ENCODE measurements at regions of chr18 and their contacts with region 1.

Region 1: DNA sequence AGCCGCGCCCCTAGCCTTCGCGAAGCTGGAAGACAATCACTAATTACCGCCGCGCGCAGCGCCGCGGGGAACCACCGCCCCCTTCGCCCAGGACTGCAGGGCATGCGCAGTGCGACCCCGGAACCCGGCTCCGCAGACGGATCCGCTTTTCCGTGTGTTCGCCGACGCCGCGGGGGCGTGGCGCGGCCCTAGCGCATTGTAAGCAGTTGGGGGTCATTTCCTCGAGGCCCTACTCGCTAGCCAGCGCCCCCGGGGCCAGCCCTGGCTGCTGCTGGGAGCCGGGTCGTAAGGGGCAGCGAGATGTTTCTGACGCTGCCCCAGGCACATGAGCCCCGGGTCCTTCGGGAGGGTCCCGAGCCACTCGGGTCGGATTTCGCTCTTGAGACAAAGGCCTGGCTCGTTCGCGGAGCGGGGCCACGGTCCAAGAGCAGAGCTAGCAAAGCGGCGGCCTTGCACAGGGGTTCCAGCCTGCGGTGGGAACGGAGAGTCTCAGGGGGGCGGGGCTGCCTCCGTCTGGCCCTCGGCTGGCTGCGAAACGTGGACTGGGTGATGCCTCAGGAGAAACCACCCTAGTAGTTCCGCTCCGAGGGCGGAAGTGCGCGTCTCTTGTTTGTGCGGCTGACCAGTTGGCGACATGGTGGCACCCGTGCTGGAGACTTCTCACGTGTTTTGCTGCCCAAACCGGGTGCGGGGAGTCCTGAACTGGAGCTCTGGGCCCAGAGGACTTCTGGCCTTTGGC is at the starts of genes ELP2 and SLC39A6:
- DNase-seq: peak; percentile 98
- H3K4me3 ChIP-seq: peak within 1 kb of the TSS; percentile 68 to 89 (median 74)
- H3K27ac ChIP-seq: peak within 1 kb of the TSS; percentile 96 to 99 (median 98)
- H3K4me1 ChIP-seq: peaks cover 6 to 40% (median 30%) of the 10 kb centered on the region in 4 donors
- H3K27me3 ChIP-seq: no peaks in the 10 kb centered on the region
- CTCF ChIP-seq: no peak
- EP300 ChIP-seq: peak in 1 of 4 donors; percentile 52
- POLR2A ChIP-seq: peak; percentile 32 to 34
- total RNA-seq, gene ELP2: 51.7 to 77.2 (median 67.2) TPM
- total RNA-seq, gene SLC39A6: 28.1 to 34.6 (median 31.8) TPM

Region 2: DNA sequence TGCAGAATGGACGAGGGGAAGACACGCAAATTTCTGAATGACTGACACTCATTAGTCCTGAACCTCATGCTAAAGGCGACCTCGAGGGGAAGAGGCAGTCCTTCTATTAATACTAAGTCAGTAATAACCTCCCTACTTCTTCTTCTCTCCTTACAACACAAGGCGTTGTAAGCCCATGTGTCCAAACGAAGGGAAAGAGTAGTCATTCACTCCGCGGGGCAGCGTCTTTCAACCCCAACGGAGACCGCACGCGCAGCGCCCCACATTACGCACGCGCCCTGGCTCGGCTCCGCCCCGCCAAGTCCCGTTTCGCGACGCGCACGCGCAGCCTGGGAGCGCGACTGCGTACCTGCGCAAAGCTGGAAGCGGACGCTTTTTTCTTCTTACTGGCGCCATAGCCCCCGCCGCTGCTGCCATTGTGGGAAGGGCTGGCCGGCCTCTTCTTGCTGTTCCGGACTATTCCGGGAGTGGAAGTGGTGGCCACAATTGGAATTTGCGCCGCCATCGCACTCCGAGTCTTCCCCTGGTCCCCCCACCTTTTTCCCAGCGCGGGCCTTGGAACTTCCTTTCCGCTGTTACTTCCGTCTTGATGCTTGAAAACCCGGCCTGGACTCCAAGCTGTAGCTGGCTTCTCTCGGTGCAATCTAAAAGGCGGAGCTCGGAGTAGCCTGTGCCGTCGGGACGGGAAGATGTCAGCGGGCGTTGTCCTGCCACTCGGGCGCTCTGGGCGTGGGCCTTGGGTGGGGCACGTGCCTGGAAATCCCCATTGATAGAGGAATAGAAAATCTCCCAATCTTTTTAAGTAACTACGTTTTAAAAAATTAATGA is 631.9 kb before region 1 on chr18 and contains the start of gene INO80C:
- intact Hi-C with region 1: loop called (anchors 5 kb)
- DNase-seq: peak; percentile 95
- H3K4me3 ChIP-seq: peak within 1 kb of the TSS; percentile 55 to 74 (median 63)
- H3K27ac ChIP-seq: peak within 1 kb of the TSS; percentile 87 to 95 (median 92)
- H3K4me1 ChIP-seq: peaks cover 4 to 39% (median 19%) of the 10 kb centered on the region in 4 donors
- H3K27me3 ChIP-seq: no peaks in the 10 kb centered on the region
- CTCF ChIP-seq: no peak
- EP300 ChIP-seq: no peak
- POLR2A ChIP-seq: peak; percentile 61 to 90
- total RNA-seq, gene INO80C: 3.7 to 25.5 (median 5.2) TPM

Region 3: GRCh38 chr18:36047521-36047920 is 81.9 kb before region 1 on chr18:
- intact Hi-C with region 1: no loop called
- DNase-seq: no peak
- H3K4me3 ChIP-seq: no peak overlapping the region
- H3K27ac ChIP-seq: no peak overlapping the region
- H3K4me1 ChIP-seq: peaks cover 0 to 5% (median 0%) of the 10 kb centered on the region in 4 donors
- H3K27me3 ChIP-seq: no peaks in the 10 kb centered on the region
- CTCF ChIP-seq: no peak
- EP300 ChIP-seq: no peak
- POLR2A ChIP-seq: no peak

Region 4: DNA sequence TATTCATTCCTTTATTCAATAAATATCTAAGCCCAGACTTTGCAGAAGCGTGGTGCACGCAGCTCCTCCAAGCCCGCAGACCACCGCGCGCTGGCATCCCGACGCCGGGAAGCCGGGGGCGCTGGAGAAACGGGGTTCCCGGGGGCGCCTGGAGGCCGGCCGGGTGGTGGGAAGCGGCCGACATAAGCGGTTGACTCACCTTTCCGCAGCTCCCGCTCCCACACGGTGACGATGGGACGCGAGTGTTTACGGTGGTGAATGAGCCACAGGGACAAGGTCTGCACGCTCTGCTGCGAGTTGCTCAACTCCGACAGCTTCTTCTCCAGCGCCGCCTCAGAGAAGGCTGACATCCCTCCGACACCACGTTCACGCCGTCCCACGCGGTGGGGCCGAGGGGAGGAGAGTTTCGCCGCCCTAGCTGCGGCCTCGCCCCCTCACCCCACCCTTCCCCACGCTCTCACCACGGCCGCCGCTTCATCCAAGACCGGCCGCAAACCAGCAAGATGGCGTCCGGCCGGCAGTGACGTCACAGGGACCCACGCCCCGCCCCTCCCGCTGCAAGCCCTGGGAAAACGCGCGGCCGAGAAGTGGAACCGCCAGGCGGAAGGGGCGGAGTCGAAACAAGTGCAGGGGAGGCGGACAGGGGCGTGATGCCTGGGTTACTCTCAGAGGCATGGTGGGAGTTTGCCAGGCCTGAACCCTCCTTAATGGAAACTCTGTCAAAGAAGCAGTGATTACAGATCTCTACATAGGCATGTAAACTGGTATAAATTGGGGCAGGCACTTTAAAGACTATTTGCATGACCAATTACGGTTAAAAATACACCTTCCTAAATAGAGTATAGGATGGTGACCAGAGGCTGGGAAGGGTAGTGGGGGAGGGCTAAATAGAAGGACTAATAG is 62.2 kb before region 1 on chr18 and contains the start of gene RPRD1A:
- intact Hi-C with region 1: loop called (anchors 1 kb)
- DNase-seq: peak; percentile 98
- H3K4me3 ChIP-seq: peak within 1 kb of the TSS; percentile 66 to 94 (median 78)
- H3K27ac ChIP-seq: peak within 1 kb of the TSS; percentile 88 to 96 (median 93)
- H3K4me1 ChIP-seq: peaks cover 0 to 13% (median 9%) of the 10 kb centered on the region in 4 donors
- H3K27me3 ChIP-seq: no peaks in the 10 kb centered on the region
- CTCF ChIP-seq: no peak
- EP300 ChIP-seq: no peak
- POLR2A ChIP-seq: peak; percentile 37 to 50
- total RNA-seq, gene RPRD1A: 68.8 to 80.3 (median 71.8) TPM

Region 5: GRCh38 chr18:36162981-36163380 is 33.5 kb after region 1 on chr18:
- intact Hi-C with region 1: no loop called
- DNase-seq: no peak
- H3K4me3 ChIP-seq: no peak overlapping the region
- H3K27ac ChIP-seq: no peak overlapping the region
- H3K4me1 ChIP-seq: peaks cover 0 to 7% (median 5%) of the 10 kb centered on the region in 4 donors
- H3K27me3 ChIP-seq: no peaks in the 10 kb centered on the region
- CTCF ChIP-seq: no peak
- EP300 ChIP-seq: no peak
- POLR2A ChIP-seq: no peak

Region 6: GRCh38 chr18:36179562-36180355 is 50.3 kb after region 1 on chr18:
- intact Hi-C with region 1: loop called (anchors 5 kb)
- DNase-seq: peak; percentile 90
- H3K4me3 ChIP-seq: no peak overlapping the region
- H3K27ac ChIP-seq: peak overlapping the region; percentile 16 to 63 (median 60)
- H3K4me1 ChIP-seq: peaks cover 0 to 15% (median 13%) of the 10 kb centered on the region in 4 donors
- H3K27me3 ChIP-seq: no peaks in the 10 kb centered on the region
- CTCF ChIP-seq: no peak
- EP300 ChIP-seq: no peak
- POLR2A ChIP-seq: no peak

Measured in sigmoid colon (tissue), 7 donors.